ENCODE measurements at regions of chr11 and their contacts with region 1.

Region 1: DNA sequence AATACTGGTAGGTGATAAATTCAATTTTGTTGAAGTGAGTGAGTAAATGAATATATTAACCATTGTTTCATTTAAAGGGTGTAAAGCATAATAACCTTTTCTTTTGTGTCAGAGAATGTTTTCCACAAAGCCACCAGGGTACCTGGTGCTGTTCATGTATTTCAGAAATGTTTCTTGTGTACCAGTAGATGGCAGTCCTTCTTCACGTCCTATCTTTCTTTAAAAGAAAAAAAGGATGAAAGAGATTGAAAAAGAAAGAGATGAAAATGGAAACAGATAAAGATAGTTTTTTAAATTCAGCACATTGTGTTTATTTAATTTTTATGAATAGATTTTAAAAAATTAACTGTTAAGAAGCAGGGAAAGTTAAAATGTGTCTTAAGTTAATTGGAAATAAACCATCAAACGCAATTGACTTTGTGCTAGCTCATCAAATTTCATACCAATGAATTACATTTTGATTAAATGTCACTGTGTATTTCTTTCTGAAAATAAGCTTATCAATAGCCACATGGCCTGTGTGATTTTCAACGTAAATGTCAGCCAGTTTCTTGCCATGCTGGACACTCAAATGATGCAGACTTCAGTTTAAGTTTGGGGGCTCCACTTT is 65.5 kb upstream of the CHORDC1 start:
- DNase-seq: no peak
- ATAC-seq: peak; percentile 63; the same call in 2 of the 3 replicates
- H3K4me3 ChIP-seq: no peak overlapping the region
- H3K27ac ChIP-seq: no peak overlapping the region
- H3K4me1 ChIP-seq: no peaks in the 10 kb centered on the region
- H3K27me3 ChIP-seq: no peaks in the 10 kb centered on the region
- CTCF ChIP-seq: peak; percentile 50 to 57 (median 54)
- EP300 ChIP-seq: no peak
- POLR2A ChIP-seq: no peak
- RAD21 ChIP-seq: peak; percentile 70

Region 2: DNA sequence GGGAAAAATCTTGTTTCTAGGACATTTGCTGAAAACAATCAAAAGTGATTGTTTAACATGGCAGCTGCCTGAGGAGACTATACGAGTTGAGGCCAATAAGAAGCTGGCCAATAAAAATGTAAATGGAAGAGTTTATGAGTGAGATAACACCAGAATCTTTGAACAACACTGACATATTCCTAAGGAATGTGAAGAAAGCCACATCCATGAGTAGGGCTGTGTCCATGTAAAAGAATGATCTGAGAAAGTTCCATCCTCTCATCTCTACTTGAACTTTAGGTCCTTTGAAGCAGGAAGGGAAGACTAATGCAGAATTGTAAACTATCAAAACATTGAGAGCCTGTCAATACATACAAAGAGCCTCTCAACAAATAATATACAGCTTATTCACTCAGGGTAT is 58.5 kb before region 1 on chr11:
- CTCF ChIA-PET with region 1: no interaction called
- POLR2A ChIA-PET with region 1: no interaction called
- RAD21 ChIA-PET with region 1: no interaction called
- SMC1A ChIA-PET with region 1: no interaction called
- in situ Hi-C with region 1: no loop called
- intact Hi-C with region 1: no loop called
- DNase-seq: no peak
- ATAC-seq: no peak
- H3K4me3 ChIP-seq: no peak overlapping the region
- H3K27ac ChIP-seq: no peak overlapping the region
- H3K4me1 ChIP-seq: no peaks in the 10 kb centered on the region
- H3K27me3 ChIP-seq: no peaks in the 10 kb centered on the region; a peak in 1 of 4 replicates
- CTCF ChIP-seq: no peak
- EP300 ChIP-seq: no peak
- POLR2A ChIP-seq: no peak
- RAD21 ChIP-seq: no peak

Region 3: DNA sequence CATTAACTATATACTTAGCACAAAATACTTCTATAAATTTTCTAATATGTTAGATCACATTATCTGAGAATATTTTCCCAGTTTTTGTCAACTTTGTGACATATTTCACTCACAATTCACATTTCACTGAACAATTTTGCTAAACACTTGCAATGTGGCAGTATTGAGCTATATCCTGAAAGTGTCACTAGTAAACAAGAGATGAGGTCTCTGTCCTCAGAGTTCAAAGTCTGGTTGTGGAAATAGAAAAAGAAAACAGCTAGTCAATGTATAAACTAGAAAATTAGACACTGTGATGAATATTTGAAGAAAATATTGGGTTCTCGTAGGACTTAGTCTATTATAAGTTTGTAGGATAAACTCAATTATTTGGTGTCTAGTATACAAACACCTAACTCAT is 21.9 kb after region 1 on chr11:
- CTCF ChIA-PET with region 1: interaction called, 20 read pairs
- POLR2A ChIA-PET with region 1: no interaction called
- RAD21 ChIA-PET with region 1: interaction called, 6 read pairs
- SMC1A ChIA-PET with region 1: interaction called, 5 read pairs
- in situ Hi-C with region 1: no loop called
- intact Hi-C with region 1: no loop called
- DNase-seq: no peak
- ATAC-seq: no peak
- H3K4me3 ChIP-seq: no peak overlapping the region
- H3K27ac ChIP-seq: no peak overlapping the region
- H3K4me1 ChIP-seq: no peaks in the 10 kb centered on the region
- H3K27me3 ChIP-seq: no peaks in the 10 kb centered on the region
- CTCF ChIP-seq: no peak; a peak in 1 of 6 replicates
- EP300 ChIP-seq: no peak
- POLR2A ChIP-seq: no peak
- RAD21 ChIP-seq: peak; percentile 38

Region 4: GRCh38 chr11:90434858-90435257 is 146.5 kb after region 1 on chr11:
- CTCF ChIA-PET with region 1: interaction called, 36 read pairs
- POLR2A ChIA-PET with region 1: no interaction called
- RAD21 ChIA-PET with region 1: interaction called, 4 read pairs
- SMC1A ChIA-PET with region 1: interaction called, 5 read pairs
- in situ Hi-C with region 1: no loop called
- intact Hi-C with region 1: loop called (anchors 10 kb)
- DNase-seq: no peak
- ATAC-seq: peak; percentile 38
- H3K4me3 ChIP-seq: no peak overlapping the region
- H3K27ac ChIP-seq: no peak overlapping the region
- H3K4me1 ChIP-seq: no peaks in the 10 kb centered on the region
- H3K27me3 ChIP-seq: no peaks in the 10 kb centered on the region
- CTCF ChIP-seq: peak in 1 of 3 experiments; percentile 38; a peak in 2 of 6 replicates
- EP300 ChIP-seq: no peak
- POLR2A ChIP-seq: no peak
- RAD21 ChIP-seq: peak; percentile 45

Region 5: DNA sequence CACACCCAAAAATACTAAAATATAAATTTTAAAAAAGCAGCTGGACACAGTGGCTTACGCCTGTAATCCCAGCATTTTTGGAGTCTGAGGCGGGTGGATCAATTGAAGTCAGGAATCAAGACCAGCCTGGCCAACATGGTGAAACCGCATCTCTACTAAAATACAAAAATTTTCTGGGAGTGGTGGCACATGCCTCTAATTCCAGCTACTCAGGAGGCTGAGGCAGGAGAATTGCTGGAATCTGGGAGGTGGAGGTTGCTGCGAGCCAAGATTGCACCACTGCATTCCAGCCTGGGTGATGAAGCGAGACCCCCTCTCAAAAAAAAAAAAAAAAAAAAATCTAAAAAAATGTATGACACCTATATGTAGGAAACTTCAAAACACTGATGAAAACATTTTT is 177.2 kb after region 1 on chr11:
- CTCF ChIA-PET with region 1: interaction called, 18 read pairs
- POLR2A ChIA-PET with region 1: no interaction called
- RAD21 ChIA-PET with region 1: interaction called, 8 read pairs
- SMC1A ChIA-PET with region 1: interaction called, 10 read pairs
- in situ Hi-C with region 1: no loop called
- intact Hi-C with region 1: no loop called
- DNase-seq: no peak
- ATAC-seq: no peak
- H3K4me3 ChIP-seq: no peak overlapping the region
- H3K27ac ChIP-seq: no peak overlapping the region
- H3K4me1 ChIP-seq: no peaks in the 10 kb centered on the region
- H3K27me3 ChIP-seq: no peaks in the 10 kb centered on the region
- CTCF ChIP-seq: no peak
- EP300 ChIP-seq: no peak
- POLR2A ChIP-seq: no peak
- RAD21 ChIP-seq: no peak

Region 6: DNA sequence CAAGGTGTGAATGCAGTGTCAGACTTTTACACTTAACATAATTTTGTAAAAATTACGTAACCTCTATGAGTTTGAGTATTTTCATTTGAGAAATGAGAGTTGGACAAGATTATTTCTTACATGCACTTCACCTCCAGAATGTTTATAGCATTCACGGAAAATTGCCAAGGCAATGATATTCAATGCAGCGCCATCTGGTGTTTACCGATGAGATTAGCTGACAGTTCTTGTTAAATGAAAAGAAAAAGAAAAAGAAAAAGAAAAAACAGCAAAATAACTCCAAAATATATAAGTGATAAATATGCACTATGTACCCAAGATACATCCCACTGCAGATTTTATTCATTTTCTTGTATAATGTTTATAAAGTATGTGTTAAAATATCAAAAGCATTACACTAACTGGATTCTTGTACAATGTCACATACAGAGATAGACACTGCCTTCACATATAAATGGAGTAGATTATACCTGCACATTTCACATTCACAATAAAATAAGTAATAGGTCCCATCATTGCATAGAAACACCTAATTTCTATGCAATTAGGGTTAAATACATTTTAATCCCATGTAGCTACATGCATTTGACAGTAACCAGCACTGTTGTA is 960.0 kb after region 1 on chr11:
- CTCF ChIA-PET with region 1: interaction called, 18 read pairs
- POLR2A ChIA-PET with region 1: no interaction called
- RAD21 ChIA-PET with region 1: no interaction called
- SMC1A ChIA-PET with region 1: no interaction called
- in situ Hi-C with region 1: loop called (anchors 25 kb)
- intact Hi-C with region 1: loop called (anchors 5 kb)
- DNase-seq: no peak
- ATAC-seq: peak; percentile 55; the same call in 2 of the 3 replicates
- H3K4me3 ChIP-seq: no peak overlapping the region
- H3K27ac ChIP-seq: no peak overlapping the region
- H3K4me1 ChIP-seq: no peaks in the 10 kb centered on the region
- H3K27me3 ChIP-seq: no peaks in the 10 kb centered on the region
- CTCF ChIP-seq: peak; percentile 56 to 60 (median 60)
- EP300 ChIP-seq: no peak
- POLR2A ChIP-seq: no peak
- RAD21 ChIP-seq: peak; percentile 64